Activated T-helper 1 cell treated with anti-CD3 and anti-CD28 coated beads, Interleukin-12 subunit alpha, Interleukin-12 subunit beta, Interleukin-2, Interleukin-4 antibody, amounts not matched to agents 30 ng/mL and 10 ng/mL and 1 ng/mL, durations not matched to agents 14 hours and 24 hours and 36 hours (primary cell): ENCODE measurements at regions of chr9 and their contacts with region 1.

Region 1: GRCh38 chr9:89497978-89498851 is at the start of gene SEMA4D:
- DNase-seq: peak; percentile 49
- H3K4me3 Mint-ChIP-seq: peak within 1 kb of the TSS; percentile 94
- H3K27ac Mint-ChIP-seq: peak within 1 kb of the TSS; percentile 94
- H3K4me1 Mint-ChIP-seq: peaks cover 89% of the 10 kb centered on the region
- H3K27me3 Mint-ChIP-seq: no peaks in the 10 kb centered on the region
- total RNA-seq, gene SEMA4D: 388 and 411 TPM in 2 replicates

Region 2: DNA sequence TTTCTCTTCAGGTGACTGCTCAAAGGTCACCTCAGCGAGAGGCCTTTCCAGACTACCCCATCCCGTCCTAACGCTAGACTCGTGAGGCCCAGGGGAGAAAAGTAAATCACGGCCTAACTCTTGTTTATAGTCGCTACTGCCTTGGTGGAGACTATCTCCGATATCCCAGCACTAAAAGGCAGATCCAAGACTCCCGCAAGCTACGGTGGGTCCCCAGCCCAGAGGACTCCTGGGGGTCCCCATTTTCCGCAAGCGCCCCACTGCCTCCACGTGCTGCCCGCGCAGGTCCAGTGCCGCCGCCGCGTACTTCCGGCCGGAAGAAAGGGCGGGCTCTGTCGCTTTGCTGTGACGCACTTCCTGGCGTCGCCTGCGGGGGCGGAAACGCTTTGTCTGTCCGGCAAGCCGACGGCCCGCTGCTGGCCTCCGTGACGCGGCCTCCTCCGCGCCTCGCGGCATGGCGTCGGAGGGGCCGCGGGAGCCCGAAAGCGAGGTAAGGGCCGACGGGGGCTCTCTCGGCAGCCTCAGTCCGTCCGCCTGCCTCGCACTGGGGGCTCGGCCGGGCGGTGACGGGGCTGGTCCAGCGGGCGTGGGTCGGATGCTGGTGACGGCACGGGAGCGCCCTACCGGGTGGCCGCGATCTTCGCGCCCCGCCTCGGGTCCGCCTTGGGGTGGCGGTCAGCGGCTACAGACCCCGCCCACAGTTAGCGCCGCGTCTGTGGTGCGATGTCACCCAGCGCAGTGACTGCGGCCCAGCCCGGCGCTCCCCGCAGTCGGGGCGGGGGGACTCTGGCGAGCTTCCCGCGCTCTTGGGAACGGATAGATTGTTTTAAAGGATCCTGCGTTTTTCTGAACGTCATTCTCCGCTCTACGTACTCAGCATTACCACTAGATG is 179.8 kb before region 1 on chr9 and contains the start of gene SECISBP2:
- intact Hi-C with region 1: loop called (anchors 5 kb)
- DNase-seq: peak; percentile 93
- H3K4me3 Mint-ChIP-seq: peak within 1 kb of the TSS; percentile 90
- H3K27ac Mint-ChIP-seq: peak within 1 kb of the TSS; percentile 95
- H3K4me1 Mint-ChIP-seq: peaks cover 72% of the 10 kb centered on the region
- H3K27me3 Mint-ChIP-seq: no peaks in the 10 kb centered on the region
- total RNA-seq, gene SECISBP2: 49.4 and 54.9 TPM in 2 replicates

Region 3: DNA sequence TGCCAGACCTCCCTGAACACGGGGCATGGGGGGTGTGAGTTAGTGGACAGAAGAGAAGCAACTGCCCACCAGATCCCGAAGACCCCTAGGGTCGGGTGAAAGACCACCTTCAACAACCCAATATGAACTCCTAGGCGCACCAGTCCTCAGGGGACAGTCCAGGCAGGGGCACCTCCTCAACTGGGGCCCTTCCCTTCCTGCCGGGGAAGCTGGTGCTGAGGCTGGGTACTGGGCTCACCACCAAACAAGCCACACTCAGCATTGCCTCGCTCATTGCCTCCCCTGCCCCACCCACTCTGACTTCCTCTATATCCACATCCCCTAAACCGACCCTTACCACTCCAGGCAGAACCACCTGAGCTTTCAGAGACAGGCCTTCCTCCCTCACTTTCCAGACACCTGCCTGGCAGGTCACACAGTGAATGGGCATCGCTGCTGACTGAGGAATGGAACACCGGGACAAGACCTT is 42.8 kb before region 1 on chr9:
- intact Hi-C with region 1: no loop called
- DNase-seq: peak; percentile 34
- H3K4me3 Mint-ChIP-seq: peak overlapping the region; percentile 67
- H3K27ac Mint-ChIP-seq: peak overlapping the region; percentile 86
- H3K4me1 Mint-ChIP-seq: peaks cover 84% of the 10 kb centered on the region
- H3K27me3 Mint-ChIP-seq: no peaks in the 10 kb centered on the region

Region 4: GRCh38 chr9:89466451-89467277 is 31.6 kb before region 1 on chr9:
- intact Hi-C with region 1: loop called (anchors 1 kb)
- DNase-seq: peak; percentile 44
- H3K4me3 Mint-ChIP-seq: peak overlapping the region; percentile 73
- H3K27ac Mint-ChIP-seq: peak overlapping the region; percentile 98
- H3K4me1 Mint-ChIP-seq: peaks cover 93% of the 10 kb centered on the region
- H3K27me3 Mint-ChIP-seq: no peaks in the 10 kb centered on the region

Region 5: DNA sequence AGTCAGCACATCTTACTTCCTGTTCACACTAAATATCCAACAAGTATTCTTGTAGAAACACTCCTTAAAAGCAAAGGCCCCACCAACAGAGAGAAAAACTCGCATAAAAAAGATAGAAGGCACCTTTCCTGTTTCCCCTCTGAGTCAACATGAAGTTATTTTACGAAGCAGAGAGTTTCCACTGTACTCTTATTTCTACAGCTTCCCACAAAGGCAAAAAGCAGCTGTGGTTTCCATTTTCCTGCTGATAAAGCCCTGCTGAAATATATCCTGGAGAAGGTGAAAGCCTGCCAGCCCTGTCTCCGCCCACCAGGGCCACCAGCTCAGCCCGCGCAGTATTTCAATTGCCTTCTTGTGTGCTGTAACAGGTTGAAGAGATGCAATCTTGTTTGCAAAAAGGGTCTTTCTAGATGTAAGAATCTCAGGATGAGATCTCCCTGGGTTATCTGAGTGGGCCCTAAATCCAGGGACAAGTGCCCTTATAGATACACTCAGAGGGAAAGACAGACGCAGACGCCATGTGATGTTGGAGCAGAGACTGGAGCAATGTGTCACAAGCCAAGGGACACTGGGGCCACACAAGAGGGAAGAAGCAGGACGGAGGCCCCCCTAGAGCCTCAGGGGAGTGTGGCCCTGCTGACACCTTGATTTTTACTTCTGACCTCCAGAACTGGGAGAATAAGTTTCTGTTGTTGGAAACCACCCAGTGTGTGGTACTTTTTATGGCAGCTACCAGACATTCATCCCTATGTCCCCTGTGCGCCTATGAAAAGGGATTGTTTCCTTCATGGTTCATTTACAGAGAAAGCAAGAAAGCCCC is 20.2 kb before region 1 on chr9:
- intact Hi-C with region 1: loop called (anchors 1 kb)
- DNase-seq: peak; percentile 47
- H3K4me3 Mint-ChIP-seq: peak overlapping the region; percentile 89
- H3K27ac Mint-ChIP-seq: peak overlapping the region; percentile 96
- H3K4me1 Mint-ChIP-seq: peaks cover 90% of the 10 kb centered on the region
- H3K27me3 Mint-ChIP-seq: no peaks in the 10 kb centered on the region

Region 6: GRCh38 chr9:89512382-89512781 is 14.2 kb after region 1 on chr9:
- intact Hi-C with region 1: no loop called
- DNase-seq: no peak
- H3K4me3 Mint-ChIP-seq: no peak overlapping the region
- H3K27ac Mint-ChIP-seq: no peak overlapping the region
- H3K4me1 Mint-ChIP-seq: peaks cover 46% of the 10 kb centered on the region
- H3K27me3 Mint-ChIP-seq: no peaks in the 10 kb centered on the region

Region 7: GRCh38 chr9:89522261-89522958 is 24.2 kb after region 1 on chr9:
- intact Hi-C with region 1: loop called (anchors 1 kb)
- DNase-seq: peak; percentile 77
- H3K4me3 Mint-ChIP-seq: peak overlapping the region; percentile 81
- H3K27ac Mint-ChIP-seq: peak overlapping the region; percentile 99
- H3K4me1 Mint-ChIP-seq: peaks cover 91% of the 10 kb centered on the region
- H3K27me3 Mint-ChIP-seq: no peaks in the 10 kb centered on the region

Region 8: GRCh38 chr9:89549031-89549644 is 50.9 kb after region 1 on chr9:
- intact Hi-C with region 1: loop called (anchors 1 kb)
- DNase-seq: peak; percentile 73
- H3K4me3 Mint-ChIP-seq: no peak overlapping the region
- H3K27ac Mint-ChIP-seq: peak overlapping the region; percentile 29
- H3K4me1 Mint-ChIP-seq: peaks cover 30% of the 10 kb centered on the region
- H3K27me3 Mint-ChIP-seq: peaks cover 15% of the 10 kb centered on the region